ENCODE measurements at regions of chrX and their contacts with region 1.

Region 1: DNA sequence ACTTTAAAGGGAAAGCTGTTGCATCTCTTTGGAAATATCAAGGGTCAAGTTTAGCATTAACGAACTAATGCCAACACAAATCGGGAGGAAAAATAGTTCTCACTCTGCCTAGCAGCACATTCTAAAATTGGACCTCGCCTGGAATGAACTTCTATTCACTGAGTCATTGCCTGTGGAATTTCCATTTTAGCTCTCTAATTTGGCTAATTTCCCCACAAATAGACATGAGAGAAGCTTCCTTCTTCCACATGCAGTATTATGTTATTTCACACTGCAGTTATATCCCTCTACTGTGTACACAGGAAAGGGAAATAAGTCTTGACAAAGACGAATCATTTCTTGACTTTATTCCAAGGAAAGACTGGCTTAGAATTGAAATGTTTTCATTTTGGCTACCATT is 9.3 kb downstream of the ZXDA start:
- DNase-seq: no peak
- ATAC-seq: no peak
- H3K4me3 ChIP-seq: no peak overlapping the region
- H3K27ac ChIP-seq: no peak overlapping the region
- H3K4me1 ChIP-seq: no peaks in the 10 kb centered on the region
- H3K27me3 ChIP-seq: no peaks in the 10 kb centered on the region

Region 2: DNA sequence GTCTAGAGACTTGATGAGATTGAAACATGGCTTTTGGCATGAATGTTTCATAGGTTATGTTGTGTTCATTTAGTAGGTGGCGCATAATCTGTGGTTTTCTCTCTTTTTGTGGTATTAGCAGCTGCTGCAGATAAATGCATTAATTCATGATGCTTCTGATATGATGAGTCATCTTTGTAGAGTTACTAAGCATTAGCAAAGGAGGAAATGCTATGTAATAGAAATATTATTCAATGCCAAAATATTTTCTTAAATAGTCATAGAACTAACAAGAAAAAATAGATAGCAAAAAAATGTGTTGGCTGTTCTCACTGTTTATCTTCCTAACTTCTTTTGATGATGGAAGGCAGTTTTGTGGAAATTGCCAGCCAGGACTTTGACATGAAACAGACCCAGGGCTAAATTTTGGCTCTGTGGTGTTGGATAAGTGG is 305.6 kb before region 1 on chrX:
- intact Hi-C with region 1: loop called in 1 of 2 experiments (anchors 10 kb)
- DNase-seq: no peak
- ATAC-seq: no peak
- H3K4me3 ChIP-seq: no peak overlapping the region
- H3K27ac ChIP-seq: no peak overlapping the region
- H3K4me1 ChIP-seq: no peaks in the 10 kb centered on the region
- H3K27me3 ChIP-seq: no peaks in the 10 kb centered on the region

Region 3: DNA sequence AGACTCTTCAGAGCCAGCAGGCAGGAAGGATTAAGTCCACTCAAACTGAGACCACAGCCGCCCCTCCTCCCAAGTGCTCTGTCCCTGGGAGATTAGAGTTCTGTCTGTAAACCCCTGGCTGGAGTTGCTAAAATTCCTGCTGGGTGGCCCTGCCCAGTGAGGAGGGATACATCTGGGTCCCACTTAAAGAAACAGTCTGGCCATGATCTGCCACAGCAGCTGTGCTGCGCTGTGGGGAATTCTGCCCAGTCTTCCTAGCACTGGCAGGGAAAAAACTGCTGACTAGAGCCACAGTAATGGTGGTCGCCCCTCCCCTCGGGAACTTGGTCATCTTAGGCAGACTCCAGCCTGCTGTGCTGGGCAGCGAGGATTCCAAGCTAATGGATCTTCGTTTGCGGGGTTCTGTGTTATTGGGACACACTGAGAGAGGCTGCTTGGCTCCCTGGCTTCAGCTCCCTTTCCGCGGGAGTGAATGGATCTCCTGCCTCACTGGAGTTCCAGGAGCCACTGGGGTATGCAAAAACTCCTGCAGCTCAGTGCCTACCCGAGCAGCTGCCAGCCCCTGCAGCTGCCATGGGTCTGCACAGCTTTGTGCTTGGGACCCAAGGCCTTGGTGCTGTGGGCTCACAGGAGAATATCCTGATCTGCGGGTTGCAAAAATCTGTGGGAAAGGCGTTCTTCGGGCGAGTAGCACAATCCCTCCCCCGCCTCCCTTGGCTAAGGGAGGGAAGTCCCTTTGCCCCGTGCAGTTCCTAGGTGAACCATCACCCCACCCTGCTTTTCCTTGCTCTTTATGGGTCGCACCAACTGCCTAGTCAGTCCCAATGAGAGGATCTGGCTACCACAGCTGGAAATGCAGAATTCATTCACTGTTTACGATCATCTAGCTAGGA is 293.4 kb before region 1 on chrX:
- intact Hi-C with region 1: no loop called
- DNase-seq: no peak
- ATAC-seq: no peak
- H3K4me3 ChIP-seq: no peak overlapping the region
- H3K27ac ChIP-seq: no peak overlapping the region
- H3K4me1 ChIP-seq: no peaks in the 10 kb centered on the region
- H3K27me3 ChIP-seq: no peaks in the 10 kb centered on the region

Region 4: GRCh38 chrX:57964975-57965374 is 64.0 kb after region 1 on chrX:
- intact Hi-C with region 1: no loop called
- DNase-seq: no peak
- ATAC-seq: no peak
- H3K4me3 ChIP-seq: no peak overlapping the region
- H3K27ac ChIP-seq: no peak overlapping the region
- H3K4me1 ChIP-seq: no peaks in the 10 kb centered on the region
- H3K27me3 ChIP-seq: no peaks in the 10 kb centered on the region